Activated CD8-positive, alpha-beta T cell treated with anti-CD3 and anti-CD28 coated beads for 36 hours (primary cell): ENCODE measurements at regions of chr17 and their contacts with region 1.

Region 1: GRCh38 chr17:28416703-28417311 is 10.8 kb upstream of the SLC46A1 start:
- DNase-seq: peak; percentile 72
- ATAC-seq: peak; percentile 97
- H3K4me3 Mint-ChIP-seq: no peak overlapping the region
- H3K27ac Mint-ChIP-seq: no peak overlapping the region
- H3K4me1 Mint-ChIP-seq: peaks cover 2% of the 10 kb centered on the region
- H3K27me3 Mint-ChIP-seq: peaks cover 4% of the 10 kb centered on the region
- CTCF ChIP-seq: peak; percentile 76

Region 2: DNA sequence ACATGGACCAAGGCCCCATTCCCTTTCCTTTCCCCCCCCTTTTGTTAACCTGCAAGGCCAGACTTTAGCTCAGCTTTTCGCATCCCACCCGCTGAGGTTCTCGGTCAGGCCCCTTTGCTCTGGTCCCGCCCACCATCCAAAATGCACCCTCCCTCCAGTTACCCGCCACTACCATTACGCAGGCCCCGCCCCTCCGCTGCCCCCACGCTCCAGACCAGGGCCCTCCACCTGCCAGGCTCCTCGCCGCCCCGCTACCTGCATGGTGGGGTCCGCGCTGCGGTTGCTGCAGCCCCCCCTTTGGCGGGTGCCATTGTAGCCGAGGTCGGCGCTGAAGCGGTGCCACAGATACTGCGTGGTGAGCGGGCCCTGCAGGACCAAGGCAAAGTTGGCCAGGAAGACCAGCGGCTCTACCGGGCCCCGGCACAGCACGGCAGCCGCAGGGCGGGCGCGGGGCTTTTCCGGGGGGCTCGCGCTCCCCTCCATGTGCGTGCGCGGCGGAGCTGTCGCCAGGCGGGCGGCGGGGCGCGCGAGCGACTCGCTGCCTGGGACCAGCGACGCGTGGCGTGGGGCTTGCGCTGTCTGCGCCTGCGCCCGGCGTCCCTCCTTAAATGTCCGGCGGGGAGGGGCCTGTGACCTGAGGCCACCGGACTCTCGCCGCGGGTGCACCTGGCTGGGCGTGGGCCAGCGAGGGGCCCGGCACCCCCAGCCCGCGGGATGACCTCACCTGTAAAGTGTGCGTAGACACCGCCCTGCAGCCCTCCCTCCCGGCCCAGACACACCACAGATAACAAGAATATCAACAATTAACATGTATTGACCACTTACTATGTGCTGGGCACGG is 11.0 kb before region 1 on chr17 and contains the start of gene SLC46A1:
- CTCF ChIA-PET with region 1: interaction called, 63 read pairs
- POLR2A ChIA-PET with region 1: interaction called, 7 read pairs
- intact Hi-C with region 1: no loop called
- DNase-seq: peak; percentile 82
- ATAC-seq: peak; percentile 95
- H3K4me3 Mint-ChIP-seq: peak within 1 kb of the TSS; percentile 67
- H3K27ac Mint-ChIP-seq: peak within 1 kb of the TSS; percentile 32
- H3K4me1 Mint-ChIP-seq: peaks cover 2% of the 10 kb centered on the region
- H3K27me3 Mint-ChIP-seq: no peaks in the 10 kb centered on the region
- CTCF ChIP-seq: no peak
- total RNA-seq, gene SLC46A1: 2.1 to 3.1 TPM

Region 3: GRCh38 chr17:28433721-28434120 is 16.9 kb after region 1 on chr17:
- CTCF ChIA-PET with region 1: interaction called, 13 read pairs
- POLR2A ChIA-PET with region 1: no interaction called
- intact Hi-C with region 1: no loop called
- DNase-seq: no peak
- ATAC-seq: no peak
- H3K4me3 Mint-ChIP-seq: no peak overlapping the region
- H3K27ac Mint-ChIP-seq: no peak overlapping the region
- H3K4me1 Mint-ChIP-seq: no peaks in the 10 kb centered on the region
- H3K27me3 Mint-ChIP-seq: peaks cover 17% of the 10 kb centered on the region
- CTCF ChIP-seq: no peak